Natural killer cell (primary cell): ENCODE measurements at regions of chr7 and their contacts with region 1.

Region 1: DNA sequence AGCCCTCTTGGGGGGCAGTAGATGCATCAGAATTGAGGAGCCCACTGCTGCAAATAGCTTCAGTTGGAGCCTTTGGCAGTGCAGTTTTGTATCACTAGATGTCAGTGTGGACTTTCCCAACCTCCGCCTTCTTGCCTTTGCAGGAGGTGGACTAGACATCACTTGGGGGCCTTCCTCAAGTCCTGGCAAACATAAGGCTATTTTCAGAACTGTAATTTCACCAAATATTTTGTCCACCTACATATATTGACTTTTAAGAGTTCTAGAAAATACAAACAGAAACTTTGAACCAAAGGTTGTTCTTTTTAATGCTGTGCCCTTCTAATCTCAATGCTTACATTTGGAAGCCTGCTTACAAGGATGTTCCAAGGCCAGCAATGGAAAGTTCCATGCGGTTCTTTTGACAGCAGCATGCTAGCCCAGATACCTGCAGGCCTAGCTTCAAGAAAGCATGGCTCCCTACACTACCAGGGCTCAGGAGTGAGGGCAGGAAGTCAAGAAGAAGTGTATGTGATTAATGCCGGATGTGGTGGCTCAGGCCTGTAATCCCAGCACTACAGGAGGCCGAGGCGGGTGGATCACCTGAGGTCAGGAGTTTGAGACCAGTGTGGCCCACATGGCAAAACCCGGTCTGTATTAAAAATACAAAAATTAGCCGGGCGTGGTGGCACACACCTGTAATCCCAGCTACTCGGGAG is 8.0 kb upstream of the ZNRF2 start:
- DNase-seq: peak; percentile 31 to 79
- ATAC-seq: peak; percentile 76 to 92 (median 84)
- H3K4me3 ChIP-seq: no peak overlapping the region
- H3K4me3 Mint-ChIP-seq: no peak overlapping the region
- H3K27ac ChIP-seq: no peak overlapping the region
- H3K27ac Mint-ChIP-seq: no peak overlapping the region
- H3K4me1 ChIP-seq: no peaks in the 10 kb centered on the region
- H3K4me1 Mint-ChIP-seq: peaks cover 11 to 15% of the 10 kb centered on the region in 2 donors
- H3K27me3 ChIP-seq: no peaks in the 10 kb centered on the region
- H3K27me3 Mint-ChIP-seq: no peaks in the 10 kb centered on the region
- CTCF ChIP-seq: peak; percentile 73

Region 2: GRCh38 chr7:30105208-30105607 is 171.1 kb before region 1 on chr7:
- intact Hi-C with region 1: no loop called
- DNase-seq: no peak
- ATAC-seq: no peak
- H3K4me3 ChIP-seq: no peak overlapping the region
- H3K4me3 Mint-ChIP-seq: no peak overlapping the region
- H3K27ac ChIP-seq: no peak overlapping the region
- H3K27ac Mint-ChIP-seq: no peak overlapping the region
- H3K4me1 ChIP-seq: no peaks in the 10 kb centered on the region
- H3K4me1 Mint-ChIP-seq: no peaks in the 10 kb centered on the region
- H3K27me3 ChIP-seq: no peaks in the 10 kb centered on the region
- H3K27me3 Mint-ChIP-seq: no peaks in the 10 kb centered on the region
- CTCF ChIP-seq: no peak

Region 3: GRCh38 chr7:30412810-30413504 is 136.6 kb after region 1 on chr7:
- intact Hi-C with region 1: loop called (anchors 1 kb)
- DNase-seq: peak in 1 of 2 donors; percentile 63
- ATAC-seq: peak in 2 of 3 donors; percentile 69 to 76
- H3K4me3 ChIP-seq: no peak overlapping the region
- H3K4me3 Mint-ChIP-seq: no peak overlapping the region
- H3K27ac ChIP-seq: no peak overlapping the region
- H3K27ac Mint-ChIP-seq: no peak overlapping the region
- H3K4me1 ChIP-seq: no peaks in the 10 kb centered on the region
- H3K4me1 Mint-ChIP-seq: no peaks in the 10 kb centered on the region
- H3K27me3 ChIP-seq: no peaks in the 10 kb centered on the region
- H3K27me3 Mint-ChIP-seq: no peaks in the 10 kb centered on the region
- CTCF ChIP-seq: peak; percentile 38

Region 4: GRCh38 chr7:30445770-30446169 is 169.4 kb after region 1 on chr7:
- intact Hi-C with region 1: loop called (anchors 10 kb)
- DNase-seq: peak; percentile 78 to 79
- ATAC-seq: peak; percentile 99 to 100 (median 99)
- H3K4me3 ChIP-seq: no peak overlapping the region
- H3K4me3 Mint-ChIP-seq: no peak overlapping the region
- H3K27ac ChIP-seq: peak overlapping the region; percentile 3
- H3K27ac Mint-ChIP-seq: peak overlapping the region; percentile 14 to 66
- H3K4me1 ChIP-seq: peaks cover 9% of the 10 kb centered on the region
- H3K4me1 Mint-ChIP-seq: peaks cover 5 to 10% of the 10 kb centered on the region in 2 donors
- H3K27me3 ChIP-seq: no peaks in the 10 kb centered on the region
- H3K27me3 Mint-ChIP-seq: no peaks in the 10 kb centered on the region
- CTCF ChIP-seq: peak; percentile 44